HepG2 (cell line): ENCODE measurements at regions of chr5 and their contacts with region 1.

Region 1: GRCh38 chr5:50962934-50963872 is 296.8 kb downstream of the PARP8 start:
- DNase-seq: peak; percentile 45
- ATAC-seq: peak; percentile 96
- H3K4me3 ChIP-seq: peak overlapping the region in 2 of 3 experiments; percentile 23 to 42; a peak in 2 of 6 replicates
- H3K27ac ChIP-seq: no peak overlapping the region
- H3K4me1 ChIP-seq: 0 out of 2 replicates have a peak, but pooled peaks cover 4% of the 10 kb centered on the region
- H3K27me3 ChIP-seq: peaks cover 0 to 44% of the 10 kb centered on the region in 2 experiments
- CTCF ChIP-seq: peak; percentile 94
- EP300 ChIP-seq: no peak
- POLR2A ChIP-seq: no peak
- RAD21 ChIP-seq: peak; percentile 79

Region 2: GRCh38 chr5:50975840-50976239 is 12.6 kb after region 1 on chr5:
- CTCF ChIA-PET with region 1: no interaction called
- POLR2A ChIA-PET with region 1: no interaction called
- in situ Hi-C with region 1: no loop called
- intact Hi-C with region 1: no loop called
- DNase-seq: no peak
- ATAC-seq: no peak
- H3K4me3 ChIP-seq: no peak overlapping the region
- H3K27ac ChIP-seq: no peak overlapping the region
- H3K4me1 ChIP-seq: no peaks in the 10 kb centered on the region
- H3K27me3 ChIP-seq: no peaks in the 10 kb centered on the region
- CTCF ChIP-seq: no peak
- EP300 ChIP-seq: no peak
- POLR2A ChIP-seq: no peak
- RAD21 ChIP-seq: no peak

Region 3: GRCh38 chr5:50995272-50995942 is 32.2 kb after region 1 on chr5:
- CTCF ChIA-PET with region 1: no interaction called
- POLR2A ChIA-PET with region 1: no interaction called
- in situ Hi-C with region 1: no loop called
- intact Hi-C with region 1: no loop called
- DNase-seq: no peak
- ATAC-seq: no peak
- H3K4me3 ChIP-seq: no peak overlapping the region
- H3K27ac ChIP-seq: no peak overlapping the region
- H3K4me1 ChIP-seq: no peaks in the 10 kb centered on the region
- H3K27me3 ChIP-seq: no peaks in the 10 kb centered on the region
- CTCF ChIP-seq: no peak
- EP300 ChIP-seq: no peak
- POLR2A ChIP-seq: no peak
- RAD21 ChIP-seq: no peak

Region 4: DNA sequence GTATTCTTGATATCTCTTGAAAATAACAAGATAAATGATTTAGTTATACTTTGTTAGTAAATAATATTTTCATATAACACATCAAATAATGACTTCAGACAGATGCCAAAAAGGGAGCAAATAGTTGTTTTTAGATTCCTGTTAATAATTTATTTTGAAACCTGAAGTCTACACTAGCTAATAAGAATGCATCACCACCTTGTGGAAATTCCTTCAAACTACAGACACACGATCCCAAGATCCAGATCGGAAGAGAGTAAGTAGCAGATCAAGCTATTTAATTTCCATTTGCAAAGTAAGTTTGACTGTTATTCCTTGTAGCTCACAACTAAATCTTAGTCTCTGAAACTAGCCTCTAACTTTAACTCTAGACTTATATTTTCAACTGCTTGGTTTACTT is 384.5 kb after region 1 on chr5:
- CTCF ChIA-PET with region 1: interaction called, 4 read pairs
- POLR2A ChIA-PET with region 1: no interaction called
- in situ Hi-C with region 1: loop called (anchors 10 kb)
- intact Hi-C with region 1: loop called (anchors 1 kb)
- DNase-seq: peak; percentile 4
- ATAC-seq: no peak
- H3K4me3 ChIP-seq: no peak overlapping the region
- H3K27ac ChIP-seq: no peak overlapping the region
- H3K4me1 ChIP-seq: no peaks in the 10 kb centered on the region
- H3K27me3 ChIP-seq: no peaks in the 10 kb centered on the region
- CTCF ChIP-seq: 0 out of 2 replicates have a peak, but pooled peaks have one; percentile 6
- EP300 ChIP-seq: no peak
- POLR2A ChIP-seq: no peak
- RAD21 ChIP-seq: no peak

Region 5: GRCh38 chr5:52007230-52007858 is 1044.1 kb after region 1 on chr5:
- CTCF ChIA-PET with region 1: interaction called, 16 read pairs
- POLR2A ChIA-PET with region 1: no interaction called
- in situ Hi-C with region 1: loop called (anchors 5 kb)
- intact Hi-C with region 1: loop called (anchors 1 kb)
- DNase-seq: peak; percentile 33
- ATAC-seq: peak; percentile 89
- H3K4me3 ChIP-seq: no peak overlapping the region
- H3K27ac ChIP-seq: no peak overlapping the region
- H3K4me1 ChIP-seq: no peaks in the 10 kb centered on the region
- H3K27me3 ChIP-seq: no peaks in the 10 kb centered on the region
- CTCF ChIP-seq: peak; percentile 77
- EP300 ChIP-seq: no peak
- POLR2A ChIP-seq: no peak
- RAD21 ChIP-seq: peak; percentile 33; the same call in 1 of the 2 replicates

Region 6: DNA sequence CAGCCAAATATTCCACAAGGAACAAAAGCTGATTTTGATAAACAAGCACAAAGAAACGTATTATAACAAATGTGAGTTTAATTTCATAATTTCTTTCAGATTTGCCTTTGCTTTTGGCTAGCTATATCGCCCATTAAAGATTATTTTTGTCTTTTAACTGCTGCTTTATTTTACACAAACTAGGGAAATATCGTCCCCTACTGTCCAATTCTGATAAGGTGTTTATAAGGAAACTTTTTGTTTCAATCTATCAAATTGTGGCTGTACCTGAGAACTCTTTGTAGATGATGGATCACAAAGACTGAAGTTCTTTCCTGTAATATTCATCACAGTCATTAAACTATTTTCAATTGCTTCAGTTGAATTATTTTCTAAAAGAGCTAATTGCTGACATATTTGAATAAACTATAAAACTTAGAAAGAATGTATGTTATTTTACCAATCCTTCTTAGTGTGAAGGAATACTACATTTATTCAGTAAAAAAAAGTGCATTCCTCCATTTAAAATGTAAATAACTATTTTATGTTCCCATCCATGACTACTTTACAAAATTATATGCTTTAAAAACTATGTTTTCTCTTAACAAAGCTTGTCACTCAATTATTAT is 1393.2 kb after region 1 on chr5:
- CTCF ChIA-PET with region 1: no interaction called
- POLR2A ChIA-PET with region 1: no interaction called
- in situ Hi-C with region 1: loop called (anchors 25 kb)
- intact Hi-C with region 1: loop called (anchors 1 kb)
- DNase-seq: no peak
- ATAC-seq: no peak
- H3K4me3 ChIP-seq: no peak overlapping the region
- H3K27ac ChIP-seq: no peak overlapping the region
- H3K4me1 ChIP-seq: no peaks in the 10 kb centered on the region
- H3K27me3 ChIP-seq: no peaks in the 10 kb centered on the region
- CTCF ChIP-seq: peak; percentile 41
- EP300 ChIP-seq: no peak
- POLR2A ChIP-seq: no peak
- RAD21 ChIP-seq: no peak

Region 7: GRCh38 chr5:52657247-52657645 is 1694.0 kb after region 1 on chr5:
- CTCF ChIA-PET with region 1: interaction called, 7 read pairs
- POLR2A ChIA-PET with region 1: no interaction called
- in situ Hi-C with region 1: loop called (anchors 10 kb)
- intact Hi-C with region 1: loop called (anchors 2 kb)
- DNase-seq: peak; percentile 18
- ATAC-seq: no peak
- H3K4me3 ChIP-seq: no peak overlapping the region
- H3K27ac ChIP-seq: no peak overlapping the region
- H3K4me1 ChIP-seq: no peaks in the 10 kb centered on the region
- H3K27me3 ChIP-seq: no peaks in the 10 kb centered on the region
- CTCF ChIP-seq: peak; percentile 53
- EP300 ChIP-seq: no peak
- POLR2A ChIP-seq: no peak
- RAD21 ChIP-seq: no peak